ENCODE measurements at regions of chr2 and their contacts with region 1.

Region 1: GRCh38 chr2:19362755-19363473 is 4.5 kb upstream of the OSR1 start:
- DNase-seq: peak; percentile 75 to 80
- H3K4me3 ChIP-seq: peak overlapping the region; percentile 72
- H3K27ac ChIP-seq: peak overlapping the region; percentile 24
- H3K4me1 ChIP-seq: peaks cover 7% of the 10 kb centered on the region; the same call in 1 of the 2 replicates
- H3K27me3 ChIP-seq: no peaks in the 10 kb centered on the region
- CTCF ChIP-seq: peak; percentile 92

Region 2: GRCh38 chr2:17830053-17831034 is 1532.6 kb before region 1 on chr2:
- CTCF ChIA-PET with region 1: no interaction called
- POLR2A ChIA-PET with region 1: no interaction called
- intact Hi-C with region 1: no loop called
- DNase-seq: peak; percentile 56 to 62
- H3K4me3 ChIP-seq: peak overlapping the region; percentile 38; the same call in 1 of the 2 replicates
- H3K27ac ChIP-seq: no peak overlapping the region
- H3K4me1 ChIP-seq: no peaks in the 10 kb centered on the region
- H3K27me3 ChIP-seq: no peaks in the 10 kb centered on the region
- CTCF ChIP-seq: peak; percentile 86

Region 3: GRCh38 chr2:18435421-18436037 is 927.4 kb before region 1 on chr2:
- CTCF ChIA-PET with region 1: no interaction called
- POLR2A ChIA-PET with region 1: no interaction called
- intact Hi-C with region 1: loop called (anchors 2 kb)
- DNase-seq: peak; percentile 25 to 45
- H3K4me3 ChIP-seq: no peak overlapping the region
- H3K27ac ChIP-seq: no peak overlapping the region
- H3K4me1 ChIP-seq: no peaks in the 10 kb centered on the region
- H3K27me3 ChIP-seq: no peaks in the 10 kb centered on the region
- CTCF ChIP-seq: peak; percentile 90

Region 4: DNA sequence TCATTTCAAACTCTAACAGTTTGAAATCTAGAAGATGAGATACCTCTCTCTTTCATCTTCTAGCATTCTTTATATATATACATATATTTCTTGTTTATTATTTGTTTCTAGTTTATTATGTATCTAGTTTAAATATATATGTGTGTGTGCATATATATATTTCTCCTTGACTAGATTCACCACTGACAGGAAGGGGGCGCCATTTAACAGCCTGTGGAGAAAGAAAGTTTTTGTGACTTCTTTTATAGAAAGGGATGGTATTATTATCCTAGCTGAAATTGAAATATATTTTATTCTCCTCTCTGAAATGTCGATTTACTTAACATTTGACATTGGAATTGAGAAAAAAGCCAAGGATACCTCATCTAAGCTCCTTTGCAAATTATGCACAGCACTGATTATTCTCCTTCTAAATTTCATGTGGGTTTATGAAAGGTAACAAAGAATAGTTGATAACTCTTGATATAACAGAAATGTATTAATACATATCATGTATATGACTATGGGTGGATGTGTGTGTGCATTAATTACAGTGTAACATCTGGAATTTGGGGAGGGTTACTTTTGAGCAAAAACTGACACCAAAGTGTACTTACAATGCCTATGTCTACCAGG is 612.9 kb before region 1 on chr2:
- CTCF ChIA-PET with region 1: no interaction called
- POLR2A ChIA-PET with region 1: interaction called, 4 read pairs
- intact Hi-C with region 1: loop called (anchors 1 kb)
- DNase-seq: peak; percentile 47 to 51
- H3K4me3 ChIP-seq: no peak overlapping the region
- H3K27ac ChIP-seq: no peak overlapping the region
- H3K4me1 ChIP-seq: peaks cover 31% of the 10 kb centered on the region
- H3K27me3 ChIP-seq: no peaks in the 10 kb centered on the region
- CTCF ChIP-seq: peak; percentile 95

Region 5: DNA sequence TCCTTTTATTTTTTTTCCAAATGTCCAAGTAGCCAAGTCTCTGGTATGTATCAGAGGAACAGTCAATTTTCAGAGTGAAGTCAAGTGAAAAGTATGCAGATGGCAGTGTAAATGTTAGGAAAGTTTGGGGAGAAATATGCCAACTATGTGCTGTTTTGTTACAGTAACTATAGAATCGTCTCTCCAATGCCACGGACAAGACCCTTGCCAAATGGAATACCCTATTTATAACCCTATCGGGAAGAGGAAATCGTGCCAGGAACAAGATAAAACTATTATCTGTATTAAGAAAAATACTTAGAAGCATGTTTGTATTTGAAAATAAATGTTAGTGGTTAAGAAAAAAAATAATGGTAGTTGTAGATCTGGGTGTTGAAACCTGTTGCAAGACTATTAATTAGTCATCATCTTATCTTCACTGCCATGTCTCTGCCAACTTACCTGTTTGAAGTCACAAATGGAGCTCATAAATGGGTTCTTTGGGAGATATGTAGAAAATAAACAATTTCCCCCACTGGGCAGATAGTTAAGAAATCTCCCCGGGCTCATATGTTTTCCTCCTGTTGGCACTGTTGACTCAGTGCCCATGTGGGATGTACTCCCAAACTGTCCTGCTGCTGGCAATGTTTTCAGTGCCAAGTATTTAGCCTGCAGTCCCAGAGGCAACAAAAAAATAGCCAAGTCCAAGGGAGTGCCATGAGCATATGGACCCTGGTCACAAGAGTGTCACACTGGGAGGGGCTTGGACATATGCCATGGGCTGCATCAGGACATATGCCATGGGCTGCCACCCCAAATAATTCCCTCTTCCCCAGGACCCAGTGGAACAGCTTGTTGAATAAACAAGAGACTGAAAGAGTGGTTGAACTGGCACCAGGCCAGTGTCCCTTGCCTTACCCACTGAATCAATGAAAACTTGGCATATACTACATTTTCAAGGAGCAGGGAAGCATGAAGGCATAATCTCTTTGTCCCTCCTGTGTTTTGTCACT is 371.4 kb before region 1 on chr2:
- CTCF ChIA-PET with region 1: no interaction called
- POLR2A ChIA-PET with region 1: no interaction called
- intact Hi-C with region 1: loop called (anchors 2 kb)
- DNase-seq: peak; percentile 88 to 99
- H3K4me3 ChIP-seq: peak overlapping the region; percentile 16; the same call in 1 of the 2 replicates
- H3K27ac ChIP-seq: peak overlapping the region; percentile 87
- H3K4me1 ChIP-seq: peaks cover 44% of the 10 kb centered on the region
- H3K27me3 ChIP-seq: no peaks in the 10 kb centered on the region
- CTCF ChIP-seq: no peak

Region 6: DNA sequence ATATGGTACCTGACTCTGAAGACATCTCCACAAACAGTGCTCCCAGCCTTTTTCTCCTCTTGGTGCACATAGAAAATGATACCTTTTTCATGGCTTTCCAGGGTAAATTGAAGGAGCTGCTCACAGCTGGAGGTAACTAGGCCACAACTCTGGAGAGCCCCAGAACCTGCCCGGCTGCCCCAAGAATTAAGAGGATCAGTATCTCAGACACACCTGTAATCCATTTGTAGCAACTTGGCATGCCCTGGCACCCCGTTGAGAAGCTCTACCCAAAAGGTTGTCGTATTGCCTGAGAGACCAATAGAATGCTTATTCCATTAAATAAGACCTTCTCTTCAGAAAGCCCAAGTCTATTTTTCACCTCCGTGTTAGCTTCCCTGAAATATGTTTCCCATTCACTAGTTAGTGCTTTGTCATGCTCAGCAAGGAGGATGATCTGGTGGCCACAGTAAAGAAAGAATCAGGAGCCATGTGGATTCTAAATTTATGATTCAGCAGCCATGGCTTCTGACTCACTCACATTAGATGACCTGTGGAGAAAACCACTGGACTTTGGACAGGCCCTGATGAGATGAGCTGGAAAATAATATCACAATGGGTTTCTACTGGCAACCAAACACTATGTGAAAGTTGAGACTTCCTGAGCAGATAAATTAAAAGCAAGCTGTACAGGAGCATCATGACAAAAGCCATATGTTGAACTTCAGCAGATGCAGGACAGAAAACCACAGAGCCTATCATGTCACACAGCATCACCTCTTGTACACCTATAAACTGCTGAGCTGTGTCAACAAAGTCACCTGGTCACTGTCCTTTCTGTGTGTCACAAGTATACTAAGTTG is 248.8 kb after region 1 on chr2:
- CTCF ChIA-PET with region 1: no interaction called
- POLR2A ChIA-PET with region 1: no interaction called
- intact Hi-C with region 1: loop called (anchors 2 kb)
- DNase-seq: peak; percentile 58 to 98
- H3K4me3 ChIP-seq: peak overlapping the region; percentile 9; the same call in 1 of the 2 replicates
- H3K27ac ChIP-seq: peak overlapping the region; percentile 98
- H3K4me1 ChIP-seq: peaks cover 85% of the 10 kb centered on the region
- H3K27me3 ChIP-seq: no peaks in the 10 kb centered on the region
- CTCF ChIP-seq: no peak

Region 7: DNA sequence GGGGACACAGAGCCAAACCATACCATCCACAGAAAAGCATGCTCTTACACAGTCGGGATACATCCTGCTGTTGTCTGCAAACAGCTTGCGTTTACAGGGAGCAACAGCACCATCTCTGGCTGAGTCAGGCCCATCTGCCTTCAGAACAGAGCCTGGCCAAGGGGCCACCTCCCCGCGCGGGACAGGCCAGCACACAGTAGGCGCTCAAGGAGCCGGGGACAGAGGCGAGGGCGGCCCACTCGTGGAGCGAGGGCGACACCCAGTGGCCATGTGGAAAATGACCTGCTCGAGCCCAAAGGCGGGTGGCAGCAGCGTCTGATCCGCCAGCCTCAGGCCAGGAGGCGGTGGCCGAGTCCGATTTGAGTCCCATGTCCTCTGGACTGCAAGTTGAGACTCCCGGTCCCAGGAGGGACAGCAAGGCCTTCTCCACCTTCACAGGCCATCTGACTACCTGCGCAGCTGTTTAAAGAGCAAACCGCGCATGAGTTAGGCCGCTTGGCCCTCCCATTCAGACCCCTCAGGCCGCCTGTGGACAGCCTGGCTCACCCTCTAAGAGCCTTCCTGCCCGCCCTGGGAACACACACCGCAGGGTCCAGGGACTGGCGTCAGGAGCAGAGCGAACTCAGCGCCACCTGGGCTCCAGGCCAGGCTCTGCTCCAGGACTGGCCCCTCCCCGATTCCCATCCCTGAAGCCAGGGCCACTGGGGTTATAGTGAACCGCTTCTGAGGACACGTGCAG is 500.6 kb after region 1 on chr2:
- CTCF ChIA-PET with region 1: interaction called, 5 read pairs
- POLR2A ChIA-PET with region 1: no interaction called
- intact Hi-C with region 1: loop called (anchors 2 kb)
- DNase-seq: peak in 1 of 2 experiments; percentile 58
- H3K4me3 ChIP-seq: no peak overlapping the region
- H3K27ac ChIP-seq: no peak overlapping the region
- H3K4me1 ChIP-seq: peaks cover 14% of the 10 kb centered on the region
- H3K27me3 ChIP-seq: no peaks in the 10 kb centered on the region
- CTCF ChIP-seq: peak; percentile 98